HEK293 (cell line): ENCODE measurements at regions of chr6 and their contacts with region 1.

Region 1: DNA sequence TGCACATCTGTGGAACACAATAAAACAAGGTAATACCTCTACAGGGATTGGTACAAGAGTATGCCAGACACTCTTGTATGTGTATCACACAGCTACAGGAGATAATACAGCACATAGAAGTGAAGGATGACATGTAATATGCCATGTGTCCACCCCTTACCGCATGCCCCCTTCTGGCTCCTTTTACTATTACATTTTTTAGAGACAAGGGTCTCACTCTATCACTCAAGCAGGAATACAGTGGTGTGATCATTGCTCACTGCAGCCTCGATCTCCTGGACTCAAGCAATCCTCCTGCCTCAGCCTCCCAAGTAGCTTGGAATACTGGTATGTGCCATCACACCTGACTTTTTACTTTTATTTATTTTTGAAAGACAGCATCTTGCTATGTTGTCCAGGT is 4.2 kb upstream of the NCR3 start:
- H3K4me3 ChIP-seq: no peak overlapping the region
- H3K27ac ChIP-seq: no peak overlapping the region
- H3K4me1 ChIP-seq: no peaks in the 10 kb centered on the region
- CTCF ChIP-seq: peak; percentile 35; the same call in 1 of the 2 replicates

Region 2: GRCh38 chr6:31493875-31494694 is 102.9 kb before region 1 on chr6:
- CTCF ChIA-PET with region 1: interaction called, 61 read pairs
- POLR2A ChIA-PET with region 1: interaction called, 5 read pairs
- H3K4me3 ChIP-seq: peak overlapping the region; percentile 60
- H3K27ac ChIP-seq: peak overlapping the region; percentile 64
- H3K4me1 ChIP-seq: no peaks in the 10 kb centered on the region
- CTCF ChIP-seq: peak; percentile 98

Region 3: GRCh38 chr6:31546962-31547726 is 49.9 kb before region 1 on chr6 and contains the start of gene NFKBIL1:
- CTCF ChIA-PET with region 1: interaction called, 431 read pairs
- POLR2A ChIA-PET with region 1: interaction called, 17 read pairs
- H3K4me3 ChIP-seq: peak within 1 kb of the TSS; percentile 47
- H3K27ac ChIP-seq: peak within 1 kb of the TSS; percentile 50
- H3K4me1 ChIP-seq: peaks cover 2% of the 10 kb centered on the region; the same call in 1 of the 2 replicates
- CTCF ChIP-seq: no peak; the same call in 1 of the 2 replicates

Region 4: DNA sequence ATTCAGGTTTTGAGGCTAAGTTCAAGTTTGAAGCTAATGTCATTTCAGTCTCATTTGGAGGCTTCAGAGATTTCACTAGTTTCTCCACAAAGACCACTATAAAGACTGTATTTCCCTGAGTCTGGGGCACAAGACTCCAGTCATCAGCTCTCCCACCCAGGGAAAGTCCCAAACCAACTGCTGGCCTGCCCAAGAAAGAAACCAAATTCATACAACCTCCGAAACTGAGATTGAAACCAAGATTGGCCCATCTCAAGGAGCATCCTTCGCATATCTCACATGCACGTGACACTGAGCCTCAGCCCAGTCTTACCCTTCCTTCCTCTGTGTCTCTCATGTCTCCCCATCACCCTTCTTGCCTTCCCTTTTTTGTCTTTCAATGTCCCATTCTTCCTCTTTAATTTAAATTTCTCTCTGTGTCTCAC is 28.5 kb before region 1 on chr6:
- CTCF ChIA-PET with region 1: interaction called, 518 read pairs
- POLR2A ChIA-PET with region 1: interaction called, 3 read pairs
- H3K4me3 ChIP-seq: no peak overlapping the region
- H3K27ac ChIP-seq: no peak overlapping the region
- H3K4me1 ChIP-seq: no peaks in the 10 kb centered on the region
- CTCF ChIP-seq: no peak

Region 5: GRCh38 chr6:31609519-31610406 is 12.8 kb after region 1 on chr6:
- CTCF ChIA-PET with region 1: interaction called, 113 read pairs
- POLR2A ChIA-PET with region 1: interaction called, 4 read pairs
- H3K4me3 ChIP-seq: no peak overlapping the region
- H3K27ac ChIP-seq: peak overlapping the region; percentile 11
- H3K4me1 ChIP-seq: peaks cover 7% of the 10 kb centered on the region; the same call in 1 of the 2 replicates
- CTCF ChIP-seq: no peak

Region 6: DNA sequence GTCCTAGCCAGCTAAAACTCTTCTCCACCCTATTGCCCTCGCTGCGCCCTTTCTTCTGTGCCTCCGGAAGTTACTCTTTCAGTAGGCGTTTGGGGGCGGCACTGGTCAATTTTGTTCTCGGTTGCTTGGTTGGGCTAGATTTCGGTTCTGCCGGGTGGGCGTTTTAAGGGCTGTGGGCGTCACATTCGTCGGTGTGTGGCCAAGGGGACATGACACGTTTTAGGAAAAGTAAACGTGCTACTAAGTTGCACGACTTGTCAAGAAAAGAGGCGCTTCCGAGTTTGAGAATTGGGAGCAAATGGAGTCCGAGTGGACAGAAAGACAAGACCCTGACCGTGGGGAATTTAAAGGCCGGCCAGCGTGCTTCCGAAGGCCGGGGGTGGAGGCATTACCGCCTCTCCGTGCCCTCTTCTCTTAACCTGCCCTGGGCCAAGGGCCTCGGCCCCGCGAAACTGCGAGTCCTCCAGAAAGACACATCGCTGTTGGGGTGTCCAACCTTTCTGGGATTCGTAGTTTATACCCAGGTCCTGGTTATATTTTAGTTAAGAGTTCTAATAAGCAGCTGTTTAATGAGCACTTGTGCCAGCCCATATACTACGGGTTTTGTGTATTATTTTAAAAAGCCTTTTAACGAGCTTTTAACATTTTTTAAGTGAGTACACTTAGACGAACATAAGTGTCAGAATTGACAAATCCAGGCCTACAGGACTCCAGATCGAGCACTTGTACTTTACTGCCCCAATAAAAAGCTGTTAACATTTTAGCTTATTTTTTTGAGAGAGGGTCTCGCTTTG is 56.1 kb after region 1 on chr6:
- CTCF ChIA-PET with region 1: interaction called, 12 read pairs
- POLR2A ChIA-PET with region 1: interaction called, 4 read pairs
- H3K4me3 ChIP-seq: peak overlapping the region; percentile 85
- H3K27ac ChIP-seq: peak overlapping the region; percentile 87
- H3K4me1 ChIP-seq: 0 out of 2 replicates have a peak, but pooled peaks cover 6% of the 10 kb centered on the region
- CTCF ChIP-seq: peak; percentile 35; the same call in 1 of the 2 replicates

Region 7: DNA sequence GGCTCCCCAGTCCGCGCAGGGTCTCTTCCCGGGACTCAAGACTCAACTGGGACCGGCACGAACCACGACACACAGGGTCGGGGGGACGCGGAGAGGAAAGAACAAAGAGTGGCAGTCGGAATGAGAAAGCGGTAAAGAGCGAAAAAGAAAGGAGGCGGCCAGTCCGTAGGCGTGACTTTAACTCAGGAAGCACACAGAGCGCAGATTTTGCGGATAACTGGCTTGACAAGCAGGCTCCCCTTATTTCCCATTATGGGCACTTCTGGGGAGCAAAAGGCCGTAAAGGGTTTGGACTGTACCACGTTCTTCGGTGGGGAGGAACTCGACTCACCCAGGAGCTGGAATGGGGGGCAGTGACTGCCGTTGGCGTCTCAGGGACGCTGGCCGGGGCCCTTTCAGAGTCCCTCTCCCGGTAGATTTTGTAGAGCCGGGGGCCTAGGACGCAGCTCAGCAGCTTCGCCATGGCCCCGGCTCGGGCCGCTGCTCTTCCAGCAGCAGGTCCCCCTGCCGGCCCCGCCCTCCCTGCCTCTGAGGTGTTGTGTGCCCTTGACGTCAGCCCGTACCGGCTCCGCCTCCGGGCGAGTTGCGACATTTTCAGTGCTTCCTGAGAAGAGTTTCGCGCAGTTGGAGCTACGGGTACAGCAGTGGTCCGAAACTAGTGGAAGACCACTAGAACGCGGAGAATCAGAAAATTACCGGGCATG is 106.0 kb after region 1 on chr6 and contains the start of gene ABHD16A:
- CTCF ChIA-PET with region 1: no interaction called
- POLR2A ChIA-PET with region 1: no interaction called
- H3K4me3 ChIP-seq: peak within 1 kb of the TSS; percentile 63
- H3K27ac ChIP-seq: peak within 1 kb of the TSS; percentile 62
- H3K4me1 ChIP-seq: no peaks in the 10 kb centered on the region
- CTCF ChIP-seq: 0 out of 2 replicates have a peak, but pooled peaks have one; percentile 9